A673 (cell line): ENCODE measurements at regions of chr4 and their contacts with region 1.

Region 1: GRCh38 chr4:156594624-156595023 is 377.0 kb downstream of the PDGFC start:
- DNase-seq: peak; percentile 77
- H3K4me3 ChIP-seq: no peak overlapping the region
- H3K27ac ChIP-seq: no peak overlapping the region
- H3K4me1 ChIP-seq: peaks cover 52% of the 10 kb centered on the region
- H3K27me3 ChIP-seq: no peaks in the 10 kb centered on the region
- CTCF ChIP-seq: no peak

Region 2: DNA sequence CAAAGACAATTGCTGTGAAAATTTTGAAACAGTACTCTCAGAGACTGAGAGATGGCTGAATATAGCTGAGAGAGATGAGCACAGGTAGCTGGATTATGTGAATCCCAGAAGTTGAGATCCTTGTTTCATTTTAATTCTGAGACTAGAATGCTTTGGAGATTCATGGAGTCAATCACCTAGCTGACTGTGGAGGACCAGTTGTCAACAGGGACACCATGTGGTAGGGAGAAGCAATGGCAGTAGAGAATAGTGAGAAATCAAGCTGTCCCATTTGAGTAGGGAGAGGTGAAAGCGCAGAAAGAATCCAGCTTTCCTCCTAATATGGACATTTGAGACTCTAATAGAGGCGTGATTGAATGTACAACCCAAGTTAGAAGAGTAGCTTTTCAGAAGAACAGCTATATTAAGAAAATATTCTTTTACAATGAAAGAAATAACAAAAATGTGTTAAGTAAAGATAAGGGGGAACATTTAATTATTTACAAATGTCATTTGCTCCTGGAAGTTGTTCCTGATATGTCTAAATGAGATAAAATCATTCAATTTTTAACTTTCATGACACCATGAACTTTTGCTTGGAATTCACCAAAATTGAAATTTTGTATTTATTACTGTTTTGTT is 451.0 kb after region 1 on chr4:
- CTCF ChIA-PET with region 1: no interaction called
- POLR2A ChIA-PET with region 1: no interaction called
- intact Hi-C with region 1: loop called (anchors 10 kb)
- DNase-seq: peak; percentile 86
- H3K4me3 ChIP-seq: no peak overlapping the region
- H3K27ac ChIP-seq: no peak overlapping the region
- H3K4me1 ChIP-seq: peaks cover 19% of the 10 kb centered on the region
- H3K27me3 ChIP-seq: no peaks in the 10 kb centered on the region
- CTCF ChIP-seq: peak; percentile 89

Region 3: GRCh38 chr4:157128395-157128794 is 533.8 kb after region 1 on chr4:
- CTCF ChIA-PET with region 1: no interaction called
- POLR2A ChIA-PET with region 1: no interaction called
- intact Hi-C with region 1: loop called (anchors 10 kb)
- DNase-seq: peak; percentile 69
- H3K4me3 ChIP-seq: no peak overlapping the region
- H3K27ac ChIP-seq: no peak overlapping the region
- H3K4me1 ChIP-seq: peaks cover 10% of the 10 kb centered on the region
- H3K27me3 ChIP-seq: no peaks in the 10 kb centered on the region
- CTCF ChIP-seq: peak; percentile 67

Region 4: DNA sequence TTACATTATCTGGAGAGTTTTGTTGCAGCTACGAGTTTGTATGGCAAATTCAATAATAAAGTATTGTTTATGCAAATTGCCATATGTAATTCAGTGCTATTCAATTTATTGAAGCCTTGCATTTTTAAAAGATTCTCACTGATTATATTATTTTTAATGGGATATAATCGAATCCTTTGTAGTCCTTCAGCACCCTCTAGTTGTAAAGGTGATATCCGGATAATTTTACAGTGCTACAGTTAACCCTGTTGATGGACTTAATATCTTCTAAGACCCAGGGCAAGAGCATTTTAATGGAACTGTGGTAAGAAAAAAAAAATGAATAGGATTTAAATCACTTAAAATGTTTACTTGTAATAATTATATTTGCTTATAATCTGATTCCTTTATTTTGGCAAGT is 577.4 kb after region 1 on chr4:
- CTCF ChIA-PET with region 1: no interaction called
- POLR2A ChIA-PET with region 1: no interaction called
- intact Hi-C with region 1: loop called (anchors 5 kb)
- DNase-seq: peak; percentile 28
- H3K4me3 ChIP-seq: no peak overlapping the region
- H3K27ac ChIP-seq: no peak overlapping the region
- H3K4me1 ChIP-seq: peaks cover 14% of the 10 kb centered on the region
- H3K27me3 ChIP-seq: no peaks in the 10 kb centered on the region
- CTCF ChIP-seq: peak; percentile 49

Region 5: DNA sequence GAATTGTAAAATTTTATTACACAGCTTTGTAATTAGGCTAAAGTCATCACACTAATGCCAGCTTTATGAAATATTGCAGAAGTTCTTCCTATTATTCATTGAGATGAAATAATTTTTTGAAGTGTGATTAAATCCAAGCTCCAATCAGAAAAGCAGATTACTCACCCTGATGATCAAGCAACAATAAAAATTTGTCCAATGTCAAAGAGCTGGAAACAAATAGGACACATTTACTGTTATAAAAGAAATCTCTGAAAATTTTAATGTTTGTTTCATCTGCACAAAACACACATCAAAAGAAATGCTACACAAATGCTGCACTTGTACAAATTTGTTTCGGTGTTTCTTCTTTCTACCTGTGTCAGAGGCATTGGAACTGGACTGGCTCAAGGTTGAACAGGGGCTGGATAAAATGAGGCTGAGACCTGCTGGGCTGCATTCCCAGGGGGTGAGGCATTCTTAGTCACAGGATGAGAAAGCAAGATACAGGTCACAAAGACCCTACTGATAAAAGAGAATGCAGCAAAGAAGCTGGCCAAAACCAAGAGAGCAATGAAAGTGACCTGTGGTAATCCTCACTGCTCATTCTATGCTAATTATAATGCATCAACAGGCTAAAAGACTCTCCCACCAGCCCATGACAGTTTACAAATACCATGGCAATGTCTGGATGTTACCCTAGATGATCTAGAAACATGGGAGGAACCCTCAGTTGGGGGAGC is 1500.0 kb after region 1 on chr4:
- CTCF ChIA-PET with region 1: no interaction called
- POLR2A ChIA-PET with region 1: no interaction called
- intact Hi-C with region 1: no loop called
- DNase-seq: no peak
- H3K4me3 ChIP-seq: no peak overlapping the region
- H3K27ac ChIP-seq: no peak overlapping the region
- H3K4me1 ChIP-seq: no peaks in the 10 kb centered on the region
- H3K27me3 ChIP-seq: no peaks in the 10 kb centered on the region
- CTCF ChIP-seq: no peak